Natural killer cell (primary cell): ENCODE measurements at regions of chr1 and their contacts with region 1.

Region 1: DNA sequence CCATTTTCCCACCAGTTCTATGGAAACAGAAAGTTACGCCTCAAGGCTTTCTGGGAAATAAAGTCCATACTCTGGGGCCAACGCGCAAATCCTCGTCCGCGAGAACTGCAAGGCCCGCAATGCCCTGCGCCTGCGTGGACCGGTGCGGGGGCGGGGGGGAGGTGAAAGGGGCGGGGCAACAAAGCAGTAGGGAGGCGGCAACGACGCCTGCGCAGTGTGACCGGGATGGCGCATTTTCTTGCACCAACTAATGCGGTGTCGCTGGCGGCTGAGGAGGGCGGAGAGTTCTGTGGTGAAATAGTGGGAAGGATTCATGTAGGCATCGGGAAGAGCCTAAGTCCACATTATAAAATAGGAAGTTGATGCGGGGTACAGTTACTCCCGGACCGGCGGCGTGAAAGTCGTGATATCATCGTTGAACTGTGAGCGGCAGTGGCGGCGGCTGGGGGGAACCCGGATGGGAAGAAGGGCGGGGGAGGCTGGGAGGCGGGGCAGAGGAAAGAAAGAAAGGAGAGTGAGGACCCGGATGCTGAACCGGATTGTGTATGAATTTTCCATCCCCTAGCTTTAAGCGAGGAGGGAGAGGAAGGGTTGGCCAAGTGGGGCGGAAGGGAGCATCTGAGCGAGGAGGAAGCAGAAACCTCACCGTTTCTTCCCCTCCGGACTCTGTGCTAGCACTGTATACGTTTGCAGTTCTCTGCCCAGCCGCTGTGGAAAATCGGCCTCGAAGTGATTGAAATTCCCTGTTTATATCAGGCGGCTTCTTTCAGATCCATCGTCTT is at the start of gene GGPS1:
- DNase-seq: peak; percentile 95 to 99
- ATAC-seq: peak; percentile 71 to 92 (median 81)
- H3K4me3 ChIP-seq: peak within 1 kb of the TSS; percentile 96
- H3K4me3 Mint-ChIP-seq: no peak within 1 kb of the TSS
- H3K27ac ChIP-seq: peak within 1 kb of the TSS; percentile 92
- H3K27ac Mint-ChIP-seq: no peak within 1 kb of the TSS
- H3K4me1 ChIP-seq: peaks cover 25% of the 10 kb centered on the region
- H3K4me1 Mint-ChIP-seq: peaks cover 33 to 39% of the 10 kb centered on the region in 2 donors
- H3K27me3 ChIP-seq: no peaks in the 10 kb centered on the region
- H3K27me3 Mint-ChIP-seq: no peaks in the 10 kb centered on the region
- CTCF ChIP-seq: no peak
- total RNA-seq, gene GGPS1: 18.7 to 26.0 (median 23.9) TPM

Region 2: GRCh38 chr1:234599617-234600417 is 728.7 kb before region 1 on chr1:
- intact Hi-C with region 1: loop called (anchors 10 kb)
- DNase-seq: peak; percentile 61 to 90
- ATAC-seq: peak; percentile 68 to 87 (median 79)
- H3K4me3 ChIP-seq: peak overlapping the region; percentile 48
- H3K4me3 Mint-ChIP-seq: peak overlapping the region; percentile 87
- H3K27ac ChIP-seq: peak overlapping the region; percentile 95
- H3K27ac Mint-ChIP-seq: peak overlapping the region; percentile 97 to 99
- H3K4me1 ChIP-seq: peaks cover 33% of the 10 kb centered on the region
- H3K4me1 Mint-ChIP-seq: peaks cover 46 to 48% of the 10 kb centered on the region in 2 donors
- H3K27me3 ChIP-seq: no peaks in the 10 kb centered on the region
- H3K27me3 Mint-ChIP-seq: no peaks in the 10 kb centered on the region
- CTCF ChIP-seq: no peak

Region 3: DNA sequence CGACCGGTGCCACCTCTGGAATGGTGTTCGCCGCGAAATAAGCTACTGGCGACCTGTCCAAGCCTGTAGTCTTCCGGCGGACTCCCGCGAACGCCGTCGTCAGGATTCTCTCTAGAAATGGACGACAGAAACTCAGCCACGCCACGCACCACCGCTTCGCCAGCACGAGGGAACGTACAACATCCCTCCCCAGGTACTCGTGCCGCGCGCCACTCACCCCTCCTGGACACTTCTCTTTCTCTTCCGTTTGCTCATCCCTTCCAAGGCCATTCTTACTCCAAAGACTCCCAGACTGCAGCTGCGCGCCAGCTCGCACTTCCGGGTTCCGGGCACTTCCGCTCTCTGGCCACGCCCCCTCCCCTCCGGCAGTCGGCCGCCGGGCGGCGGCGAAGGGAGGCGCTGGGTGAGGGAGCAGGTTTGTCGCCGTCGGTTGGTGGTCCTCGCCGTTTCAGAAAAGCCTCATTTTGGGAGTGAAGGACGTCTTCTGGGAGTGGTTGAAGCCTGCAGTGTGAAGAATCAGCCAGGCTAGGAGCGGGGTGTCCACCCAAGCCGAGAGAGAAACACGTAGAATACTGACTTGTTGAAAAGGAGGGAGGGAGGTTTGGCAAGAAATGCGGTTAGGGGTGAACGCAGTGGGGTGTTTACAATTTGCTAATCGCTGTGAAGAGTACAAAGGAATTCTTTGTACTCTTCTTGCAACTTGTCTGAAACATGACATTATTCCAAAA is 167.4 kb before region 1 on chr1 and contains the start of gene RBM34:
- intact Hi-C with region 1: loop called (anchors 2 kb)
- DNase-seq: peak; percentile 90 to 96
- ATAC-seq: peak; percentile 93 to 98 (median 95)
- H3K4me3 ChIP-seq: peak within 1 kb of the TSS; percentile 80
- H3K4me3 Mint-ChIP-seq: peak within 1 kb of the TSS; percentile 92
- H3K27ac ChIP-seq: peak within 1 kb of the TSS; percentile 81
- H3K27ac Mint-ChIP-seq: peak within 1 kb of the TSS; percentile 96 to 97
- H3K4me1 ChIP-seq: peaks cover 22% of the 10 kb centered on the region
- H3K4me1 Mint-ChIP-seq: peaks cover 18 to 20% of the 10 kb centered on the region in 2 donors
- H3K27me3 ChIP-seq: no peaks in the 10 kb centered on the region
- H3K27me3 Mint-ChIP-seq: no peaks in the 10 kb centered on the region
- CTCF ChIP-seq: no peak
- total RNA-seq, gene RBM34: 163 to 187 (median 180) TPM

Region 4: DNA sequence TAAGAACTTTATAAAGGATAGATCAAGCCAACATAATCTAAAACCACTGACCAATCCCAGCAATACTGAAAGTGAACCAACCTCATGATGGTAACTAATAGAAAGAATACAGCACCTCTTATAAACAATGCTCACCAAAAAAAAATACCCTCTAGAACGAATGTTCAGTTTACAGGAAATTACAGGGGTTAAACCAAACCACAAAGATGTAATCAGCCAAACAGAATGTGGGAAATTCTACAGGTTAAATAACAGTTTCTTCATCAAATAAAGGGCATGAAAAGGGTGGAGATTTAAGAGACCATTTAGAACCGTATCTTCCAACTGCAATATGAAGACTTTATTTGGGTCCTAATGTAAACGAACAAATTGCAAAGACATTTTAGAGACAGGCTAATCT is 31.0 kb before region 1 on chr1:
- intact Hi-C with region 1: loop called (anchors 1 kb)
- DNase-seq: peak in 1 of 2 donors; percentile 83
- ATAC-seq: peak; percentile 77 to 89 (median 85)
- H3K4me3 ChIP-seq: peak overlapping the region; percentile 1
- H3K4me3 Mint-ChIP-seq: peak overlapping the region; percentile 76
- H3K27ac ChIP-seq: peak overlapping the region; percentile 88
- H3K27ac Mint-ChIP-seq: peak overlapping the region; percentile 83 to 90
- H3K4me1 ChIP-seq: peaks cover 42% of the 10 kb centered on the region
- H3K4me1 Mint-ChIP-seq: peaks cover 50 to 56% of the 10 kb centered on the region in 2 donors
- H3K27me3 ChIP-seq: no peaks in the 10 kb centered on the region
- H3K27me3 Mint-ChIP-seq: no peaks in the 10 kb centered on the region
- CTCF ChIP-seq: no peak

Region 5: DNA sequence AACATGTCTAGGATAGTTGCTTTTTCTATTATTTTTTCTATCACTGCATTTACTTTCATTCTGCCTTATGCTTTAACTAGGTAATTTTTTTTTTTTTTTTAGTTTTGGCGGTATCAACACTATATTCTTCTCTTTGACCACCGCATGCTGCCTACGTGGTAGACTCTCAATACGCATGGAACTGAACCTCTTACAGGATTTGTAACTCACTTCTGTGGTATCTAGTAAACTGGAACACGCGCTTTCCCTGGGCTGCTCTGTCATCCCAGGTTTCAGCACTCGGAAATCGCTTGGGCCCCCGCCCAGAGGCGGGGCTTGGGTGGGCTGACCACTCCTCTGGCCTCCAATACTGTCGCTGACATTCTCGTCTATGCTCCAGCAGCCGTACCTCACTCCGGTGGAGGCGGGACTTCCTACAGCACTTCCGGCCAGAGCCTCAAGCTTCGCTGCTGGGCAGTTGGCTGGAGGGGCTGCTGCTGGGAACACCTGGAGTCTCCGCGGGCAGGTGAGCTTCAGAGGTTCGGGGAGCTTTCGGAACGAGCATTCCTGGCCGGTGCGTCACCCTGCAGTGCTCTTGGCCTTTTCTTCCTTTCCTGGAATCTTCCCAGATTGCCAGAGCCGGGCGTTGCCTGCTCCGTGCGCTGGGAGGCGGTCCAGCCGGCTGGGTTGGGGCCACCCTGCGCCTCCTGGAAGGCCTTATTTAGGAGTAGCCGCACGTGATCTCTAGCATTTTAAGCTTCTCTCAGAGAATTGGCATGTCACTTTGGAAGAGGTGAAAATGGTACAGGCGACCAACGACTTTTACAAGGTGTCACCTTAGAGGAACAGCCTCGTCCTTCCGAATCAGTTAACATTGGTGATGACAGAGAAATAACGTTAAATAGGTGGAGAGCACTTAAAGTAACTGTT is 38.7 kb after region 1 on chr1 and contains the start of gene TBCE:
- intact Hi-C with region 1: loop called (anchors 1 kb)
- DNase-seq: peak; percentile 85 to 87
- ATAC-seq: peak; percentile 100
- H3K4me3 ChIP-seq: peak within 1 kb of the TSS; percentile 66
- H3K4me3 Mint-ChIP-seq: peak within 1 kb of the TSS; percentile 99
- H3K27ac ChIP-seq: peak within 1 kb of the TSS; percentile 36
- H3K27ac Mint-ChIP-seq: peak within 1 kb of the TSS; percentile 88 to 94
- H3K4me1 ChIP-seq: peaks cover 6% of the 10 kb centered on the region
- H3K4me1 Mint-ChIP-seq: peaks cover 14 to 26% of the 10 kb centered on the region in 2 donors
- H3K27me3 ChIP-seq: no peaks in the 10 kb centered on the region
- H3K27me3 Mint-ChIP-seq: no peaks in the 10 kb centered on the region
- CTCF ChIP-seq: no peak
- total RNA-seq, gene TBCE: 24.1 to 25.2 (median 25.0) TPM

Region 6: DNA sequence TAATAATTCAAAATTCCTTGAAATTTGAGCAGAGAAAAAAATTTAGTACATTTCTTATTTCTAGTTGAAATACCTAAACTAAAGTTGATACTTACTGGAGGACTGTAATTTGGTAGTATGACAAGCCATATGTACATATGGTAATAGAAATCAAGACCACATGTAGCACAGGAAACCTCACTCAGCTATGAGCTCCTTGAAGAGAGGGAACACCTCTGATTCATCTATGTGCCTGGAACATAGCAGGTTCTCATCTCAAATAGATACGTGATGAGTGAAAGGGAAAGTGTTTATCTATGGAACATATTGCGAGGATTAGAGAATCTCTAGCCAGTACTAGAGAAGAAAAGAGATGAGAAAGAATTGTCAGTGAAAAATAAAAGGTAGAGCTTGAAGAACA is 369.0 kb after region 1 on chr1:
- intact Hi-C with region 1: no loop called
- DNase-seq: peak in 1 of 2 donors; percentile 41
- ATAC-seq: peak; percentile 92 to 99 (median 98)
- H3K4me3 ChIP-seq: no peak overlapping the region
- H3K4me3 Mint-ChIP-seq: peak overlapping the region; percentile 3
- H3K27ac ChIP-seq: no peak overlapping the region
- H3K27ac Mint-ChIP-seq: peak overlapping the region; percentile 34 to 72
- H3K4me1 ChIP-seq: no peaks in the 10 kb centered on the region
- H3K4me1 Mint-ChIP-seq: peaks cover 8 to 9% of the 10 kb centered on the region in 2 donors
- H3K27me3 ChIP-seq: no peaks in the 10 kb centered on the region
- H3K27me3 Mint-ChIP-seq: no peaks in the 10 kb centered on the region
- CTCF ChIP-seq: no peak